Activated CD8-positive, alpha-beta T cell treated with anti-CD3 and anti-CD28 coated beads, Interleukin-2, amount 10 ng/mL, durations not matched to agents 7 days and 5 days (primary cell): ENCODE measurements at regions of chr15 and their contacts with region 1.

Region 1: DNA sequence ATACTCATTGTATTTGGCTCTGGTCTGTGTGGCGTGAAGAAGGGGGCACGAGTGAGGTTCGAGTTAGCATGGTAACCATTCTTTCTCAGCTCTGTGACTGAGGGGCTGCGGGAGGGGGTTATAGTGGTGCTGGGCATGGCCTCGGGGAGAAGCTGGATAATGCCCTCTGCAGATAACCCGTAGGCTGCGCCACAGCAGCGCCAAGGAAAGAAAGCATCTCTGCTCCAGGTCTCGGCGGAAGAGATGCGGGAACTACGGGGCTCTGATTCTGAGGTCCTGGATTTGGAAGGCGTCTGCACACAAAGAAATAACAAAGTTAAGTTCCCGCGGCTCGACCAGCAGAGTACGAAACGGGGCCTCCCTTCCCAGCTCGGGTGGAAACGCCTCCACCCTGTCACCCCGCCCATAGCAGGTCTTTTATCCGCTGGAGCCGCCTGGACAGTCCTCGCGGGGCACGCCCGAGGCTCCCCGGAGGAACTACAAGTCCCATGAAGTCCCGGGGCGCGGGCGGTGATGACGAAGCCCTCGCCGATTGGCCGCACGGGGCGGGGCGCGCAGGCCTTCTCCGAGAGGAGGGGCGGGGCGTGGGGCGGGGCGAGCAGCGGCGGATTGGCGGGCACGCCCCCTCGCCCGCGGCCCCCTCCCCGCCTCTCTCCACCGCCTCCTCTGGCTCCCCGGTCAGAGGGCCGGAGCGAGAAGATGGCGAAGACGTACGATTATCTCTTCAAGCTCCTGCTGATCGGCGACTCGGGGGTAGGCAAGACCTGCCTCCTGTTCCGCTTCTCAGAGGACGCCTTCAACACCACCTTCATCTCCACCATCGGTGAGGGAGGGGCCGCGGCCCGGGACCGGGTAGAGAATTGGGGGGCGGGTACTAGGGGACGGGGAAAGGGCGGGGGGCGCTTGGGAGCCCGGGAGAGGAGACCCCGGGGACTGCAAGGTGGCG is at the start of gene RAB8B:
- DNase-seq: peak; percentile 98
- ATAC-seq: peak; percentile 88
- H3K4me3 Mint-ChIP-seq: peak within 1 kb of the TSS; percentile 99
- H3K27ac Mint-ChIP-seq: peak within 1 kb of the TSS; percentile 95
- H3K4me1 Mint-ChIP-seq: peaks cover 48% of the 10 kb centered on the region
- H3K27me3 Mint-ChIP-seq: peaks cover 3% of the 10 kb centered on the region
- total RNA-seq, gene RAB8B: 112 to 113 TPM

Region 2: DNA sequence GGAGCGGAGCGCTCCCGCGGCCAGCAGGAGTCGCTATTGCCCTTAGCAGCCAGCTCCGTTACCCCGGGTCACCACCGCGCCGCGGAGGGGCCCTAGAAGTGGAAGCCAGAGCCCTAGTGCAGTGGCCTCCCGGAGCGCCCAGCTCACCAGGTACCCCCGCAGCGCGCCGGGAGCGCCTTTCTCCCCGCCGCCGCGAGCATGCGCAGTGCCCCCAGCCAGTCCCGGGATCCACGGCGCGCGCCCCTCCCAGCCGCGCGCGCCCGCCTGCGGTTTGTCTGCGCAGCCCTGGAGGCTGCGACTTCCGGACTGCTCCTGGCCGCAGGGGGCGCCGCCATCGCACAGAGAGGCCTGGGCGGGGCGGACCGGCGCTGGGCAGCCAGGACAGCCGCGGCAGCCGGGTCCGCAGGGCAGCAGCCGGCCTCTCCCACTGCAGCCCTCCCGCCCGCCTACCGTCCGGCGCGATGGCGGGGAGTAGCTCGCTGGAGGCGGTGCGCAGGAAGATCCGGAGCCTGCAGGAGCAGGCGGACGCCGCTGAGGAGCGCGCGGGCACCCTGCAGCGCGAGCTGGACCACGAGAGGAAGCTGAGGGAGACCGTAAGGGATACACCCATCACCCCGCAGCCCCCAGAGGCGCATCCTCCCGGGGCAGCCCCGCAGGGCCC is 141.0 kb before region 1 on chr15:
- CTCF ChIA-PET with region 1: interaction called, 10 read pairs
- POLR2A ChIA-PET with region 1: no interaction called
- DNase-seq: peak; percentile 85
- ATAC-seq: peak; percentile 89
- H3K4me3 Mint-ChIP-seq: peak overlapping the region; percentile 83
- H3K27ac Mint-ChIP-seq: peak overlapping the region; percentile 48
- H3K4me1 Mint-ChIP-seq: peaks cover 30% of the 10 kb centered on the region
- H3K27me3 Mint-ChIP-seq: peaks cover 50% of the 10 kb centered on the region

Region 3: GRCh38 chr15:63203451-63204090 is 14.4 kb after region 1 on chr15:
- CTCF ChIA-PET with region 1: interaction called, 50 read pairs
- POLR2A ChIA-PET with region 1: interaction called, 35 read pairs
- DNase-seq: peak; percentile 73
- ATAC-seq: peak; percentile 79
- H3K4me3 Mint-ChIP-seq: peak overlapping the region; percentile 12
- H3K27ac Mint-ChIP-seq: peak overlapping the region; percentile 61
- H3K4me1 Mint-ChIP-seq: peaks cover 86% of the 10 kb centered on the region
- H3K27me3 Mint-ChIP-seq: no peaks in the 10 kb centered on the region

Region 4: GRCh38 chr15:63226966-63227401 is 37.8 kb after region 1 on chr15:
- CTCF ChIA-PET with region 1: interaction called, 15 read pairs
- POLR2A ChIA-PET with region 1: interaction called, 11 read pairs
- DNase-seq: no peak
- ATAC-seq: no peak
- H3K4me3 Mint-ChIP-seq: no peak overlapping the region
- H3K27ac Mint-ChIP-seq: no peak overlapping the region
- H3K4me1 Mint-ChIP-seq: peaks cover 63% of the 10 kb centered on the region
- H3K27me3 Mint-ChIP-seq: no peaks in the 10 kb centered on the region

Region 5: GRCh38 chr15:63246691-63247464 is 57.7 kb after region 1 on chr15:
- CTCF ChIA-PET with region 1: interaction called, 14 read pairs
- POLR2A ChIA-PET with region 1: interaction called, 3 read pairs
- DNase-seq: no peak
- ATAC-seq: no peak
- H3K4me3 Mint-ChIP-seq: no peak overlapping the region
- H3K27ac Mint-ChIP-seq: no peak overlapping the region
- H3K4me1 Mint-ChIP-seq: peaks cover 38% of the 10 kb centered on the region
- H3K27me3 Mint-ChIP-seq: no peaks in the 10 kb centered on the region